ENCODE measurements at regions of chr11 and their contacts with region 1.

Region 1: GRCh38 chr11:59822989-59823566 is 12.5 kb upstream of the MRPL16 start:
- DNase-seq: peak; percentile 52 to 66
- H3K4me3 ChIP-seq: no peak overlapping the region
- H3K4me3 Mint-ChIP-seq: no peak overlapping the region
- H3K27ac Mint-ChIP-seq: no peak overlapping the region
- H3K4me1 ChIP-seq: no peaks in the 10 kb centered on the region
- H3K4me1 Mint-ChIP-seq: peaks cover 6% of the 10 kb centered on the region
- H3K27me3 ChIP-seq: no peaks in the 10 kb centered on the region
- H3K27me3 Mint-ChIP-seq: no peaks in the 10 kb centered on the region
- CTCF ChIP-seq: peak; percentile 69 to 76

Region 2: GRCh38 chr11:59560702-59561469 is 262.2 kb before region 1 on chr11:
- CTCF ChIA-PET with region 1: no interaction called
- POLR2A ChIA-PET with region 1: no interaction called
- intact Hi-C with region 1: no loop called
- DNase-seq: peak; percentile 88 to 92
- H3K4me3 ChIP-seq: peak overlapping the region; percentile 64
- H3K4me3 Mint-ChIP-seq: peak overlapping the region; percentile 75
- H3K27ac Mint-ChIP-seq: peak overlapping the region; percentile 74
- H3K4me1 ChIP-seq: peaks cover 8% of the 10 kb centered on the region; the same call in 1 of the 2 replicates
- H3K4me1 Mint-ChIP-seq: peaks cover 19% of the 10 kb centered on the region
- H3K27me3 ChIP-seq: no peaks in the 10 kb centered on the region
- H3K27me3 Mint-ChIP-seq: no peaks in the 10 kb centered on the region
- CTCF ChIP-seq: no peak

Region 3: GRCh38 chr11:59918987-59919589 is 96.0 kb after region 1 on chr11:
- CTCF ChIA-PET with region 1: interaction called, 17 read pairs
- POLR2A ChIA-PET with region 1: no interaction called
- intact Hi-C with region 1: loop called (anchors 1 kb)
- DNase-seq: peak in 1 of 2 experiments; percentile 58
- H3K4me3 ChIP-seq: no peak overlapping the region
- H3K4me3 Mint-ChIP-seq: no peak overlapping the region
- H3K27ac Mint-ChIP-seq: no peak overlapping the region
- H3K4me1 ChIP-seq: no peaks in the 10 kb centered on the region
- H3K4me1 Mint-ChIP-seq: no peaks in the 10 kb centered on the region
- H3K27me3 ChIP-seq: no peaks in the 10 kb centered on the region
- H3K27me3 Mint-ChIP-seq: no peaks in the 10 kb centered on the region
- CTCF ChIP-seq: peak; percentile 50 to 57

Region 4: DNA sequence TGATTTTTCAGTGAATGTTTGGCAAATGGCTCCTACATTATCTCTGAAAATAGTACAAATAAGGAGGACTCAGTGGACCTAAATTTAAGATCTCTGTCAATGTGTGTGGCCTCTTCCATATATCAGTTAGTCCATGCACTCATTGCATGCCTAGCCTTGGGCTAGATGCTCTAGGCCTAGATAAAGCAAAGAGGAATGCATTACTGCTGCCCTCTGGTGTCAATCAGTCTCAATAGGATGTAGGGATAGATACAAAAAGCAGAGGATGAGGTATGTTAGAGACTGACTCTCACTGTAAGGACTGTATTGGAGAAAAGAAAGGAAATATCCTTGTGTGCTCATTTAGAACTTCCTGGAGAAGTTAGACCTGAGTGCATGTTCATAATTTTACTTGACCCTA is 307.4 kb after region 1 on chr11:
- CTCF ChIA-PET with region 1: no interaction called
- POLR2A ChIA-PET with region 1: no interaction called
- intact Hi-C with region 1: loop called (anchors 1 kb)
- DNase-seq: peak; percentile 65 to 68
- H3K4me3 ChIP-seq: no peak overlapping the region
- H3K4me3 Mint-ChIP-seq: no peak overlapping the region
- H3K27ac Mint-ChIP-seq: no peak overlapping the region
- H3K4me1 ChIP-seq: peaks cover 6% of the 10 kb centered on the region; the same call in 1 of the 2 replicates
- H3K4me1 Mint-ChIP-seq: peaks cover 4% of the 10 kb centered on the region
- H3K27me3 ChIP-seq: no peaks in the 10 kb centered on the region
- H3K27me3 Mint-ChIP-seq: no peaks in the 10 kb centered on the region
- CTCF ChIP-seq: peak; percentile 47 to 77

Region 5: GRCh38 chr11:60193687-60194433 is 370.8 kb after region 1 on chr11:
- CTCF ChIA-PET with region 1: no interaction called
- POLR2A ChIA-PET with region 1: no interaction called
- intact Hi-C with region 1: loop called (anchors 1 kb)
- DNase-seq: peak; percentile 58 to 75
- H3K4me3 ChIP-seq: no peak overlapping the region
- H3K4me3 Mint-ChIP-seq: no peak overlapping the region
- H3K27ac Mint-ChIP-seq: no peak overlapping the region
- H3K4me1 ChIP-seq: no peaks in the 10 kb centered on the region
- H3K4me1 Mint-ChIP-seq: no peaks in the 10 kb centered on the region
- H3K27me3 ChIP-seq: no peaks in the 10 kb centered on the region
- H3K27me3 Mint-ChIP-seq: peaks cover 5% of the 10 kb centered on the region
- CTCF ChIP-seq: peak; percentile 84 to 89

Region 6: GRCh38 chr11:60251485-60252212 is 428.6 kb after region 1 on chr11:
- CTCF ChIA-PET with region 1: no interaction called
- POLR2A ChIA-PET with region 1: no interaction called
- intact Hi-C with region 1: loop called (anchors 1 kb)
- DNase-seq: peak in 1 of 2 experiments; percentile 13
- H3K4me3 ChIP-seq: no peak overlapping the region
- H3K4me3 Mint-ChIP-seq: no peak overlapping the region
- H3K27ac Mint-ChIP-seq: no peak overlapping the region
- H3K4me1 ChIP-seq: no peaks in the 10 kb centered on the region
- H3K4me1 Mint-ChIP-seq: no peaks in the 10 kb centered on the region
- H3K27me3 ChIP-seq: no peaks in the 10 kb centered on the region
- H3K27me3 Mint-ChIP-seq: peaks cover 6% of the 10 kb centered on the region
- CTCF ChIP-seq: peak; percentile 21 to 26

Measured in Caco-2 (cell line).